ENCODE measurements at regions of chr12 and their contacts with region 1.

Region 1: GRCh38 chr12:6323340-6323994 is 13.0 kb downstream of the PLEKHG6 start:
- DNase-seq: peak; percentile 98
- H3K4me3 ChIP-seq: no peak overlapping the region
- H3K27ac ChIP-seq: peak overlapping the region; percentile 80
- H3K4me1 ChIP-seq: peaks cover 36% of the 10 kb centered on the region
- H3K27me3 ChIP-seq: no peaks in the 10 kb centered on the region
- CTCF ChIP-seq: peak; percentile 62 to 67
- POLR2A ChIP-seq: no peak

Region 2: DNA sequence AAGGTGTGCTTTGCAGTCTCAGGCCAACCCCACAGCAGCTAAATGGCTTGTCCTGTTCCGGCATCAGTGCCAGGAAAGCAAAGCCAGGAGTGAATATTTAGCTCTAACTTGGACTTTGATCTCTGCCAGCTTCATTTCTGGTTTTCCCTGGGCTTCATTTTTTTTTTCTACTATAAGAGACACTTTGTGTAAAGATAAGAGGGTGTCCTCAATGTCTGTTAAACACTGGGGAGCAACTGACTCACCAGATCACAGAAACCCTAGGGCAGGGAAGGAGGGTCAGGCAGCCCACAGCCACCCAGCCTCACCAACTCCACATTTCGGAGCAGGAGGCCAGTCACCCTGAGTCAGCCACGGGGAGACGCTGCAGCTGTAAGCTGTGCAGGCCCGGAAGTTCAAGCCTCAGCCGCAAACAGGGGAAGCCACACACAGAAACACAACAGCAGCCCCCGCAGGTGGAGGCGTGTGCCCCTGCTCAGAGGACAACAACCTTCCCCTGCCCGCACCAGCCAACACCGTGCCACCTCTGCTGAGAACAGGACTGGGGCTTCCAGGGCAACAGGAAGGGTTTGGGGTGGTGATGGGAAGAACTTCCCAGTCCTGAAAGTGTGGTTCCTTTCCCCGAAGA is 12.1 kb after region 1 on chr12:
- CTCF ChIA-PET with region 1: interaction called, 41 read pairs
- POLR2A ChIA-PET with region 1: interaction called, 6 read pairs
- dilution Hi-C with region 1: no loop called
- intact Hi-C with region 1: loop called (anchors 1 kb)
- DNase-seq: peak; percentile 85
- H3K4me3 ChIP-seq: peak overlapping the region in 2 of 3 experiments; percentile 1 to 37
- H3K27ac ChIP-seq: peak overlapping the region; percentile 92
- H3K4me1 ChIP-seq: peaks cover 63% of the 10 kb centered on the region
- H3K27me3 ChIP-seq: no peaks in the 10 kb centered on the region
- CTCF ChIP-seq: peak; percentile 70 to 71
- POLR2A ChIP-seq: no peak

Region 3: DNA sequence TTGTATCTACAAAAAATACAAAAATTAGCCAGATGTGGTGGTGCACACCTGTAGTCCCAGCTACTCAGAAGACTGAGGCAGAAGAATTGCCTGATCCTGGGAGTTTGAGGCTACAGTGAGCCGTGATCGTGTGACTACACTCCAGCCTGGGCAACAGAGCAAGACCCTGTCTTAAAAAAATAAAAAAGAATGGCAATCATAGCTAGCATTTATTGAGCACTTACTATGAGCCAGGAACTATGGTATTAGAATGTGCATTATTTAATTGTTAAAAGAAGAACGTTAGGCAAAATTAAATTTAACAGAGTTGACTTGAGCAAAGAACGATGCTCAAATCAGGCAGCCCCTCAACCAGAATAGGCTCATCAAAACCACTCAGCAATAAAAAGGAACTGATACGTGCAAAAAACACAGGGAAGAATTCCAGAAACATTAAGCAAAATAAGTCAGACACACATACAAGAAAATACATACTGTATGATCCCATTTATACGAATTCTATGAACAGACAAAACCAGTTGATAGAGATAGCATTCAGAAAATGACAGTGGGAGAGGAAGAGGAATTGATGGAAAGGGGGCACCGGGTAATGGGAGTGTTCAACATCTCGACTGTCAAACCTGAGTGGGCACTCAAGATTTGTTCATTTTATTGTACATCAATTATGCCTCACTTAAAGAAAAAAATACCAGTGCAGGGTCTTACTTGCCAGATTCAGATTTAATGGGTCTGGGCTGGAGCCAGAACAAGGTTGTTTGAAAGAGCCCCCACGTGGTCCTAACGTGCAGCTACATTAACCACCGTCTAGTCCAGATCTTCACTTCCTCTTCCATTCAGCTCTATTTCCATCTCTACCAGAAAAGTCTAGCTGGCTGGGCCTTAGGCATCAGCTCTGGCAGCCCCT is 43.9 kb after region 1 on chr12:
- CTCF ChIA-PET with region 1: interaction called, 12 read pairs
- POLR2A ChIA-PET with region 1: no interaction called
- dilution Hi-C with region 1: no loop called
- intact Hi-C with region 1: loop called (anchors 2 kb)
- DNase-seq: peak; percentile 67
- H3K4me3 ChIP-seq: no peak overlapping the region
- H3K27ac ChIP-seq: no peak overlapping the region
- H3K4me1 ChIP-seq: peaks cover 31% of the 10 kb centered on the region
- H3K27me3 ChIP-seq: no peaks in the 10 kb centered on the region
- CTCF ChIP-seq: peak in 1 of 2 donors; percentile 49
- POLR2A ChIP-seq: no peak

Region 4: DNA sequence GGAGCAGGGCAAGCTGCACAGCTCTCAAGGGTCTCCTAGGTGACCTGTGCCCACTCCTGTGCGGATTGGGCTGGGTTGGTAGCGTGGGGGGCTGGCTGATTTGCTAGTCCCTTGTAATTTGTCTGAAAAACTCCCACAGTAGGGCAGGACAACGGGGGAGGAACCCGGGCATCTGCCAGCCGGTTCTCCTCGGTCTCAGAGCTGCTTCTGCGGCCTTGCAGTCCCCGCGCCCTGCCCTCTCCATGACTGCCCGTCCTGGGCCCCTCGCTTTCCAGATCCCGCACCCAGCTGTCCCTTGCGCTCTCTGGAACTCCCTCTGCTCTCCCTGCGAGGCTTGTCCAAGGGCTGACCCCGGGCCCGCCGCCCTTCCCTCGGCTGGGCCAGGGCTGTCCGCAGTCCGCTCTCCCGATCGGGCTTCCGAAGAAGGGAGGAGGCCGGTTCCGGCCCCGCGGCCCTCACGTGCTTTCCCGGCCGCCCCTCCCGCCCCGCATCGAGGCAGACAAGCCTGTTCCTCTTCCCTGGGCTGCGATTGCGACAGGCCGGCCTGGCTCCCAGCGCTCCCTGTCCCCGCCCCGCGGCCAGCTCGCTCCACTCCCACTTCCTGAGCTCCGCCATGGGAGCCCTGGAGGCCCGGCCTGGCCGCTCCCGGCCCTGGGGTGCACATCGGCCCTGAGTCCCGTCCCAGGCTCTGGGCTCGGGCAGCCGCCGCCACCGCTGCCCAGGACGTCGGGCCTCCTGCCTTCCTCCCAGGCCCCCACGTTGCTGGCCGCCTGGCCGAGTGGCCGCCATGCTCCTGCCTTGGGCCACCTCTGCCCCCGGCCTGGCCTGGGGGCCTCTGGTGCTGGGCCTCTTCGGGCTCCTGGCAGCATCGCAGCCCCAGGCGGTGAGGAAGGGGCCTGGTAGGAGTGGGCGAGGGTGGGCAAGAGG is 60.4 kb after region 1 on chr12 and contains the start of gene LTBR:
- CTCF ChIA-PET with region 1: interaction called, 14 read pairs
- POLR2A ChIA-PET with region 1: no interaction called
- dilution Hi-C with region 1: no loop called
- intact Hi-C with region 1: loop called (anchors 1 kb)
- DNase-seq: peak; percentile 89
- H3K4me3 ChIP-seq: peak within 1 kb of the TSS; percentile 48 to 73 (median 72)
- H3K27ac ChIP-seq: peak within 1 kb of the TSS; percentile 81
- H3K4me1 ChIP-seq: peaks cover 20% of the 10 kb centered on the region
- H3K27me3 ChIP-seq: no peaks in the 10 kb centered on the region
- CTCF ChIP-seq: peak in 1 of 2 donors; percentile 5
- POLR2A ChIP-seq: peak; percentile 87
- total RNA-seq, gene LTBR: 84.1 and 102 TPM in 2 replicates

Region 5: GRCh38 chr12:6451348-6452244 is 128.1 kb after region 1 on chr12 and contains the start of gene TAPBPL:
- CTCF ChIA-PET with region 1: interaction called, 3 read pairs
- POLR2A ChIA-PET with region 1: no interaction called
- dilution Hi-C with region 1: no loop called
- intact Hi-C with region 1: loop called (anchors 1 kb)
- DNase-seq: peak; percentile 89
- H3K4me3 ChIP-seq: peak within 1 kb of the TSS; percentile 6 to 51 (median 31)
- H3K27ac ChIP-seq: peak within 1 kb of the TSS; percentile 62
- H3K4me1 ChIP-seq: peaks cover 27% of the 10 kb centered on the region
- H3K27me3 ChIP-seq: no peaks in the 10 kb centered on the region
- CTCF ChIP-seq: no peak
- POLR2A ChIP-seq: peak; percentile 41
- total RNA-seq, gene TAPBPL: 9.9 and 11.7 TPM in 2 replicates

Region 6: DNA sequence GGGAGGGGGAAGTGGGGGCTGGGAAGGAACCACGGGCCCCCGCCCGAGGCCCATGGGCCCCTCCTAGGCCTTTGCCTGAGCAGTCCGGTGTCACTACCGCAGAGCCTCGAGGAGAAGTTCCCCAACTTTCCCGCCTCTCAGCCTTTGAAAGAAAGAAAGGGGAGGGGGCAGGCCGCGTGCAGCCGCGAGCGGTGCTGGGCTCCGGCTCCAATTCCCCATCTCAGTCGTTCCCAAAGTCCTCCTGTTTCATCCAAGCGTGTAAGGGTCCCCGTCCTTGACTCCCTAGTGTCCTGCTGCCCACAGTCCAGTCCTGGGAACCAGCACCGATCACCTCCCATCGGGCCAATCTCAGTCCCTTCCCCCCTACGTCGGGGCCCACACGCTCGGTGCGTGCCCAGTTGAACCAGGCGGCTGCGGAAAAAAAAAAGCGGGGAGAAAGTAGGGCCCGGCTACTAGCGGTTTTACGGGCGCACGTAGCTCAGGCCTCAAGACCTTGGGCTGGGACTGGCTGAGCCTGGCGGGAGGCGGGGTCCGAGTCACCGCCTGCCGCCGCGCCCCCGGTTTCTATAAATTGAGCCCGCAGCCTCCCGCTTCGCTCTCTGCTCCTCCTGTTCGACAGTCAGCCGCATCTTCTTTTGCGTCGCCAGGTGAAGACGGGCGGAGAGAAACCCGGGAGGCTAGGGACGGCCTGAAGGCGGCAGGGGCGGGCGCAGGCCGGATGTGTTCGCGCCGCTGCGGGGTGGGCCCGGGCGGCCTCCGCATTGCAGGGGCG is 210.6 kb after region 1 on chr12 and contains the start of gene GAPDH:
- CTCF ChIA-PET with region 1: interaction called, 9 read pairs
- POLR2A ChIA-PET with region 1: no interaction called
- dilution Hi-C with region 1: no loop called
- intact Hi-C with region 1: loop called (anchors 2 kb)
- DNase-seq: peak; percentile 95
- H3K4me3 ChIP-seq: peak within 1 kb of the TSS; percentile 68 to 70 (median 68)
- H3K27ac ChIP-seq: peak within 1 kb of the TSS; percentile 73
- H3K4me1 ChIP-seq: peaks cover 34% of the 10 kb centered on the region
- H3K27me3 ChIP-seq: no peaks in the 10 kb centered on the region
- CTCF ChIP-seq: no peak
- POLR2A ChIP-seq: peak; percentile 99
- total RNA-seq, gene GAPDH: 4,245 and 4,648 TPM in 2 replicates

Measured in endothelial cell of umbilical vein (primary cell).